Activated CD4-positive, alpha-beta T cell treated with anti-CD3 and anti-CD28 coated beads for 36 hours (primary cell): ENCODE measurements at regions of chr14 and their contacts with region 1.

Region 1: GRCh38 chr14:23237772-23238594 is at the start of gene RNF212B:
- DNase-seq: peak; percentile 95
- ATAC-seq: peak; percentile 99
- H3K4me3 Mint-ChIP-seq: peak within 1 kb of the TSS; percentile 29
- H3K27ac Mint-ChIP-seq: no peak within 1 kb of the TSS
- H3K4me1 Mint-ChIP-seq: peaks cover 3% of the 10 kb centered on the region
- H3K27me3 Mint-ChIP-seq: peaks cover 20% of the 10 kb centered on the region
- total RNA-seq, gene RNF212B: not detected

Region 2: GRCh38 chr14:23286020-23286905 is 48.3 kb after region 1 on chr14 and contains the start of gene HOMEZ:
- CTCF ChIA-PET with region 1: no interaction called
- POLR2A ChIA-PET with region 1: interaction called, 3 read pairs
- intact Hi-C with region 1: loop called in 1 of 2 experiments (anchors 1 kb)
- DNase-seq: peak; percentile 99
- ATAC-seq: peak; percentile 98
- H3K4me3 Mint-ChIP-seq: peak within 1 kb of the TSS; percentile 99
- H3K27ac Mint-ChIP-seq: peak within 1 kb of the TSS; percentile 95
- H3K4me1 Mint-ChIP-seq: peaks cover 18% of the 10 kb centered on the region
- H3K27me3 Mint-ChIP-seq: no peaks in the 10 kb centered on the region
- total RNA-seq, gene HOMEZ: 13.7 to 17.5 TPM